Mammary epithelial cell (primary cell): ENCODE measurements at regions of chr13 and their contacts with region 1.

Region 1: DNA sequence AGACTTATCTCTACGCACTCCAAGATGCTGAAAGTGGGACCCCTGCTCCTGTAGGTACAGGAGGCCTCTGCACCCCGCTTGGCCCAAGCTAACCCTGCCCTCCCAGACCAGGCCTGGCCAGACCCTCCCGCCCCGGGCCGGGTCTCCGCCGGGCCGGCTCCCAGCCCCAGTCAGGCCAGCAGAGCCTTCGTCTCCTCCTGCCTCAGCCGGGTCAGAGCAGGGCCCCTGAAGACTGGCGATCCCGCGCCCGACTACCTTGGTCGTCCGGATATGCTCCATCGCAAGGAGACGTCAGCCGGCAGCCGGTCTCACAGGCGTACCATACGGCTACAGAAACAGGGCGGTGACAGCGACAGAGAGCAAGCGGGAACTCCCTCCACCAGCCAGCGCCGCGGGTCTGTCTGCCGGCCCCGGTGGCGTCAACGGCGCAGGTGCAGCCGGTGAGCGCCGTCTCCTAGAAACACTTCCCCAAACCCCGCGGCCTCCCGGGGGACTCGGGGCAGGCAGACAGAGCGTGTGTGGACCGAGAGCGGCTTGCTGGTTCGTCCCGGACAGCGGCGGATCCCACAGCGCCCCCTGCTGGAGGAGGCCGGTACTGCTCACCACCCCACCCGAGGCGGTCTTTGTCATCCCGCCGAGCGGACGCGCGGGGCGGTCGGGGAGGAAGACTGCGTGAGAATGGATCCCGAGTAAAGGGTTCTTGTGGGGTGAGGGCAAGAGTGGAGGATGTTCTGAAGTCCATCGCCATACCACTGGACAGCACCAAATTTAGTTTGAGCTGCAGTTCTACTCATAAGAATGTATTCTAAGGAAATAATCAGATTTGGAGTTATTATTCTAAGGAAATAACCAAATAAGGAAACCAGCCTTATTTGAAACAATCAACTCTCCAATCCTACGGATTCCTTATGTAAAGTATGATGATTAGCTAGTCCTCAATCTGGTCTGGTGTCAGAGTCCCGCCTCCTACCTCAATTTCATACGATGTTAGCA is at the start of gene MTMR6:
- DNase-seq: peak; percentile 87
- H3K4me3 ChIP-seq: peak within 1 kb of the TSS; percentile 71 to 98 (median 91)
- H3K27ac ChIP-seq: peak within 1 kb of the TSS; percentile 88
- H3K4me1 ChIP-seq: peaks cover 3% of the 10 kb centered on the region
- H3K27me3 ChIP-seq: no peaks in the 10 kb centered on the region
- CTCF ChIP-seq: peak; percentile 85 to 99
- total RNA-seq, gene MTMR6: 19.1 to 27.8 TPM

Region 2: DNA sequence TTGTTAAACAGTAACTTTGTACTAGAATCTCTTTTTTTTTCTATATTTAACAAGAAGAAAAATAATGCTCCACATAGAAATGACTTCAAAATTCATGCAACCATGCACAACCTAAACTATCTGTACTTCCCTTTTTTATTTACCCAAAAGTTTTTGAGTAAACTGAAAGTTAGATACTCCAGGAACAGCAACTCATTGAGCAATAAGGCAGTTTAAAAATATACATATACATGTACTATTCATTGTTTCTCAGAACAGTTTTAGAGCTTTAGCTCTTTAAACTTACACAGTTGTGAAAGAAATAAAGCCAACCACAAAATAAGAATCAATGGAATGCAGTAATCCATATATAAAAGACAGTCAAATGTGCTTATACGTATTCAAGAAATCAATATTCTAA is 39.2 kb before region 1 on chr13:
- CTCF ChIA-PET with region 1: no interaction called
- dilution Hi-C with region 1: no loop called
- in situ Hi-C with region 1: no loop called
- intact Hi-C with region 1: no loop called
- DNase-seq: no peak
- H3K4me3 ChIP-seq: no peak overlapping the region
- H3K27ac ChIP-seq: no peak overlapping the region
- H3K4me1 ChIP-seq: no peaks in the 10 kb centered on the region
- H3K27me3 ChIP-seq: no peaks in the 10 kb centered on the region
- CTCF ChIP-seq: no peak

Region 3: GRCh38 chr13:25267715-25268114 is 19.6 kb before region 1 on chr13:
- CTCF ChIA-PET with region 1: no interaction called
- dilution Hi-C with region 1: no loop called
- in situ Hi-C with region 1: no loop called
- intact Hi-C with region 1: loop called (anchors 1 kb)
- DNase-seq: no peak
- H3K4me3 ChIP-seq: no peak overlapping the region
- H3K27ac ChIP-seq: no peak overlapping the region
- H3K4me1 ChIP-seq: no peaks in the 10 kb centered on the region
- H3K27me3 ChIP-seq: no peaks in the 10 kb centered on the region
- CTCF ChIP-seq: peak in 1 of 2 donors; percentile 37

Region 4: DNA sequence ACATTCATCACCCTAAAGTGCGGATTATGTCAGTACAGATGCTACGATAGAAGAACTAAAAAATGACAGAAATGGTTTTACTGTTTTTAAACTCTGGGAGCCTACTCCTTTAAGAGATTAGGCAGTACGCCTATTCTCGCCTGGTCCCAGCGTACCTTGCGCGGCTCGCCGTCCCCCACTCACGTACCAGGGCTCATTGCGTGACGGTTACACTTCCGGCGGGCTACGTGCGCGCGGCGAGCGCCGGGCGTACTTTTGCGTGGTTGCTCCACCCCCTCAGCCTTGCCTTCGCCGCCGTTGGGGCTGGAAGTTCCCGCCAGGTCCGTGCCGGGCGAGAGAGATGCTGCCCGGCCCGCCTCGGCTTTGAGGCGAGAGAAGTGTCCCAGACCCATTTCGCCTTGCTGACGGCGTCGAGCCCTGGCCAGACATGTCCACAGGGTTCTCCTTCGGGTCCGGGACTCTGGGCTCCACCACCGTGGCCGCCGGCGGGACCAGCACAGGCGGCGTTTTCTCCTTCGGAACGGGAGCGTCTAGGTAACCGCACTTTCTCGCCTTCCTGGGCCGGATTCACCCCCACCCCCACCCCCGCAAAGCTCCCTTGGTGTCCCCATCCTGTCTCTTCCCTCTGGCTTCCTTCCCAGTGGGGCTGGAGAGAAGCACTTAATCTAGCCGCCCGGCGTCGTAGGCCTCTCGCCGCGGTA is 14.2 kb after region 1 on chr13 and contains the start of gene NUP58:
- CTCF ChIA-PET with region 1: no interaction called
- dilution Hi-C with region 1: no loop called
- in situ Hi-C with region 1: no loop called
- intact Hi-C with region 1: loop called (anchors 2 kb)
- DNase-seq: peak; percentile 94
- H3K4me3 ChIP-seq: peak within 1 kb of the TSS; percentile 83 to 95 (median 87)
- H3K27ac ChIP-seq: peak within 1 kb of the TSS; percentile 86
- H3K4me1 ChIP-seq: peaks cover 14% of the 10 kb centered on the region
- H3K27me3 ChIP-seq: no peaks in the 10 kb centered on the region
- CTCF ChIP-seq: no peak
- total RNA-seq, gene NUP58: 73.0 to 82.0 TPM